ENCODE measurements at regions of chr1 and their contacts with region 1.

Region 1: DNA sequence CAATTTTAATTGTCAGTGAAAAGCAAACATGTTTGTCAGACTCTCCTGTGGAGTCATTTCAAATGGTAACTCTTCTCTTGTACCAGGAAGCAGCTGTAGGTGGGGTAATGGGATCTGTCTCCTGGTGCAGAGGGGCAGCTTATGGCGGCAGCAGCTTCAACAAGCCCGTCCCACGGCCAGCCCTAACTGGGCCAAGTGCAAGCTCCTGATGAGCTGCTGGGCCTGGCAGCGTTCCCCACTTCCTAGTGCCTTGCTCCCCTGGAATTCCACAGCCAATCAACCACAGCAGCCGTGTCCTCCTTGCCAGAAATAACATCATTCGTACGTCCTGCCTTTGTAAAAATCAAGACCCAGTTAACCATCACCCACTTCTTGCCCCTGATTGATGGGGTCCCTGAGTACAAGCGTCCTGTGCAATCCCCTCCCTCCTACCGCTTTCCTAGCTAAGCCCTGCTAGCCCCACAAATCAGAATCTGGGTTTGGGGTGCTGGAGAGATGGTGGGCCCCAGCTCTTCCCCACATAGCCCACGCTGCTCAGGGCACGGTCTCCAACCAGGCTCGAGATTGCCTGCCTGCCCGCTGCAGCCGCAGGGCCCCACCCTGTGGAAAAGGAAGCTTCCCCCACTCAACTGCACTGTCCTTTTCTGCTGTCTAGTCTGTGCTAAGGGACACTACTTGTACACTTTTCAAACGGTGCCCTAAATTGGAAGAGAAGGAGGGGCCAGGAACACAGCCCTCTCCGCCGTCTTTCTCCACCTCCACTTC is 61.2 kb downstream of the TOR1AIP2 start:
- DNase-seq: no peak
- H3K4me3 ChIP-seq: no peak overlapping the region
- CTCF ChIP-seq: no peak

Region 2: DNA sequence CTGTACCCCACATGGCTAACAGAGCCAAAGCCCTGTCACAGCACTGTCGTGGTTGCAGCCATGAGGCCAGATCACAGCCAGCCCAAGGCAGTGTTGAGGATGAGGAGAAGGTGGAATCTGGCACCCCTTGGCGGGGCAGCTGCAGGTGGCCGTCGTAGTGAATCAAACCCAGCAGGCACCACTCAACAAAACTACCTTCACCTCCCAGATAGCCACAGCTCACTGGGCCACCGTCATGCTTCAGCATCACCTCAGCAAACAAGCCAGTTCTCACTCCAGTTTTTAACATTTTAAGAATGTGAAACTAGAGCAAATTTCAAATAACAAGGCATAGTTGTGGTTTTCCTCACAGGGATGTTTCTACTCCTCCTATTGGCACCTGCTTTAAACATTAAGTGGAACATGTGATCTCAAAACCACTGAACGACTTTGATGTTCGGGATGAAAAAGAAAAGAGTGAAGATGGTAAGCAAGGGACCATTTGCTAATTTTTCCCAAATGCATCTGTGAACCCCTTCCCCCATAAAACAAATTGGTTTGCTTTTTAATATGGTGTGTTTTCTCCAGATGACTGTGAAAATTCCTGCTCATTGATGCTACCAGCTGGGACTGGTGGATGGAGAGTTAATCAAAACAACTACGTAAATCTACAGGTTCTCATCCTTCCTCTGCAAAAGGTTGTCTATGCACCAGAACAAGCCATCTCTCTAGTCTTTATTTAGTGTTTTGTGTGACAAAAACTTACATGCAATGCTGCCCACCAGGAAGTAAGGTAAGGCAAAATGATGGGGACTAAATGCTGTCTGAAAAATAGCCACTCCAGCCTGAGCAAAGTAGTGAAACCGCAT is 15.7 kb after region 1 on chr1:
- CTCF ChIA-PET with region 1: interaction called, 53 read pairs
- POLR2A ChIA-PET with region 1: interaction called, 3 read pairs
- DNase-seq: no peak
- H3K4me3 ChIP-seq: no peak overlapping the region
- CTCF ChIP-seq: no peak

Measured in AG04449 (cell line).